Activated CD4-positive, alpha-beta T cell treated with anti-CD3 and anti-CD28 coated beads for 36 hours (primary cell): ENCODE measurements at regions of chr2 and their contacts with region 1.

Region 1: GRCh38 chr2:135531231-135532228 is at the start of gene R3HDM1:
- DNase-seq: peak; percentile 96
- ATAC-seq: peak; percentile 88
- H3K4me3 Mint-ChIP-seq: no peak within 1 kb of the TSS
- H3K27ac Mint-ChIP-seq: peak within 1 kb of the TSS; percentile 84
- H3K4me1 Mint-ChIP-seq: peaks cover 32% of the 10 kb centered on the region
- H3K27me3 Mint-ChIP-seq: no peaks in the 10 kb centered on the region
- total RNA-seq, gene R3HDM1: 62.6 to 100.0 TPM

Region 2: DNA sequence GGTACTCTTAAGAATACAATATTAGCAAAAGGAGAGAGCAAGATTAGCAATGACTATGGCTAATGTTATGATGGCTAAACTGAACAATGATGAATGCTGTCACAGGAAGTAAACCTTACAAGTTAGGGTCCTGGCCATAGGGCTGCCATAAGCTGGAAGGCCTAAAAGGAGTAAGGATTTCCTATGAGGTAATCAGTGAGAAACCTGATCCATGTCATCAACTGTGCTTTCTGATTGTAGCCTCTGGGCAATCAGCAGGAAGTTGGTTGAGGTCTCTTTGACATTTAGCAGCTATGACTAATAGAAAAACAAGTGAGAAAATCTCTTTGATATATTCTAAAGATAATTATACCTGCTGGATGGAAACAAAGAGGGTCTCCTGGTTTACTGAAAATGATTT is 286.5 kb before region 1 on chr2:
- CTCF ChIA-PET with region 1: no interaction called
- POLR2A ChIA-PET with region 1: no interaction called
- intact Hi-C with region 1: loop called in 1 of 2 experiments (anchors 5 kb)
- DNase-seq: peak; percentile 36
- ATAC-seq: peak; percentile 98
- H3K4me3 Mint-ChIP-seq: no peak overlapping the region
- H3K27ac Mint-ChIP-seq: peak overlapping the region; percentile 84
- H3K4me1 Mint-ChIP-seq: peaks cover 8% of the 10 kb centered on the region
- H3K27me3 Mint-ChIP-seq: no peaks in the 10 kb centered on the region

Region 3: GRCh38 chr2:135709992-135710391 is 178.5 kb after region 1 on chr2:
- CTCF ChIA-PET with region 1: interaction called, 4 read pairs
- POLR2A ChIA-PET with region 1: no interaction called
- intact Hi-C with region 1: loop called in 1 of 2 experiments (anchors 10 kb)
- DNase-seq: peak; percentile 84
- ATAC-seq: peak; percentile 74
- H3K4me3 Mint-ChIP-seq: no peak overlapping the region
- H3K27ac Mint-ChIP-seq: no peak overlapping the region
- H3K4me1 Mint-ChIP-seq: no peaks in the 10 kb centered on the region
- H3K27me3 Mint-ChIP-seq: no peaks in the 10 kb centered on the region

Region 4: GRCh38 chr2:135820003-135820618 is 288.6 kb after region 1 on chr2:
- CTCF ChIA-PET with region 1: no interaction called
- POLR2A ChIA-PET with region 1: no interaction called
- intact Hi-C with region 1: loop called in 1 of 2 experiments (anchors 1 kb)
- DNase-seq: peak; percentile 94
- ATAC-seq: peak; percentile 93
- H3K4me3 Mint-ChIP-seq: peak overlapping the region; percentile 71
- H3K27ac Mint-ChIP-seq: peak overlapping the region; percentile 87
- H3K4me1 Mint-ChIP-seq: peaks cover 45% of the 10 kb centered on the region
- H3K27me3 Mint-ChIP-seq: no peaks in the 10 kb centered on the region

Region 5: GRCh38 chr2:135885709-135886108 is 354.2 kb after region 1 on chr2:
- CTCF ChIA-PET with region 1: no interaction called
- POLR2A ChIA-PET with region 1: no interaction called
- intact Hi-C with region 1: no loop called
- DNase-seq: no peak
- ATAC-seq: no peak
- H3K4me3 Mint-ChIP-seq: no peak overlapping the region
- H3K27ac Mint-ChIP-seq: no peak overlapping the region
- H3K4me1 Mint-ChIP-seq: no peaks in the 10 kb centered on the region
- H3K27me3 Mint-ChIP-seq: peaks cover 4% of the 10 kb centered on the region